Activated B cell treated with CpG ODN at 0.5 μM for 24 hours (primary cell): ENCODE measurements at regions of chr9 and their contacts with region 1.

Region 1: DNA sequence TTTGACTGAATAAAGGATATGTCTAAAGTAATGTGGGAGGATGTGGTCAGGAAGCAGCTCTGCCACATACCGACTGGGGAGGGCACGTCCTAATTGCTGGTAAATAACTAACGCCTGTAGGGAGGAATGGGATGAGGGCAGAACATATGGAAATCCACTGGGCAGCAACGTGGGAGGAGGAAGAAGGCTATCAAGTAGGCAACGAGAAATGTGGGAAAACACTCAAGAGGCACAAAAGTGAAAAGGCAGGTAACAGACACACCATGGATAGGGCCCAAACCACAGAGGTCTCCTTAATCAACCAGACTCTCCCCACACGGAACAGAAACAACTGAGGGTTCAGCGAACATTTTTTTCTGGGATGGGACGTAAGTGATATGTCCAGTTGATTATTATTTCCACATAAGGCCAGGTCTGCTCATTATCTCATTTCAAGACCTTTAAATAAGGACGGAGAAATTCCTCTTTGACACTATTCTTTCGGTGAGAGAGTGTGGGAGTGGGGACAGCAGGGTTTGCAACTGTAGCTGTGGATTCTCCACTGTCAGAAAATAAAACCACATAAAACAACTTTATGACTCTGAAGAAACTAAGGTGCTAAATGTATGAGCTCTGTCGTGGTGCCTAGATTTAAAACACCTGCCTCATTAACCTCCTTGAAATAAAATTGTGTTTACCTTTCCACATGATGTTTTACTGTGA is 17.0 kb downstream of the IARS1 start:
- DNase-seq: no peak
- ATAC-seq: no peak
- H3K4me3 Mint-ChIP-seq: no peak overlapping the region
- H3K27ac Mint-ChIP-seq: no peak overlapping the region
- H3K4me1 Mint-ChIP-seq: no peaks in the 10 kb centered on the region
- H3K27me3 Mint-ChIP-seq: no peaks in the 10 kb centered on the region
- CTCF ChIP-seq: no peak

Region 2: DNA sequence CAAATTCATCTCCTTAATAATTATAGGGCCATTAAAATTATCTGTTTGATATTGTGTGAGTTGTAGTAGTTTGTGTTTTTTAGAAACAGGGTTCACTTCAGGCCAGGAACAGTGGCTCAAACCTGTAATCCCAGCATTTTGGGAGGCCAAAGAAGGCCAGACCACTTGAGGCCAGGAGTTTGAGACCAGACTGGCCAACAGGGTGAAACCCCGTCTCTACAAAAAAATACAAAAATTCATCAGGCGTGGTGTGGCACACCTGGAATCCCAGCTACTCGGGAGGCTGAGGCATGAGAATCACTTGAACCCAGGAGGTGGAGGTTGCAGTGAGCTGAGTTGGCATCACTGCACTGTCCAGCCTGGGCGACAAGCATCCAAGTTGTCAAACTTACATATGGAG is 40.0 kb before region 1 on chr9:
- CTCF ChIA-PET with region 1: no interaction called
- POLR2A ChIA-PET with region 1: no interaction called
- intact Hi-C with region 1: loop called (anchors 5 kb)
- DNase-seq: no peak
- ATAC-seq: no peak
- H3K4me3 Mint-ChIP-seq: no peak overlapping the region
- H3K27ac Mint-ChIP-seq: no peak overlapping the region
- H3K4me1 Mint-ChIP-seq: no peaks in the 10 kb centered on the region
- H3K27me3 Mint-ChIP-seq: no peaks in the 10 kb centered on the region
- CTCF ChIP-seq: no peak

Region 3: DNA sequence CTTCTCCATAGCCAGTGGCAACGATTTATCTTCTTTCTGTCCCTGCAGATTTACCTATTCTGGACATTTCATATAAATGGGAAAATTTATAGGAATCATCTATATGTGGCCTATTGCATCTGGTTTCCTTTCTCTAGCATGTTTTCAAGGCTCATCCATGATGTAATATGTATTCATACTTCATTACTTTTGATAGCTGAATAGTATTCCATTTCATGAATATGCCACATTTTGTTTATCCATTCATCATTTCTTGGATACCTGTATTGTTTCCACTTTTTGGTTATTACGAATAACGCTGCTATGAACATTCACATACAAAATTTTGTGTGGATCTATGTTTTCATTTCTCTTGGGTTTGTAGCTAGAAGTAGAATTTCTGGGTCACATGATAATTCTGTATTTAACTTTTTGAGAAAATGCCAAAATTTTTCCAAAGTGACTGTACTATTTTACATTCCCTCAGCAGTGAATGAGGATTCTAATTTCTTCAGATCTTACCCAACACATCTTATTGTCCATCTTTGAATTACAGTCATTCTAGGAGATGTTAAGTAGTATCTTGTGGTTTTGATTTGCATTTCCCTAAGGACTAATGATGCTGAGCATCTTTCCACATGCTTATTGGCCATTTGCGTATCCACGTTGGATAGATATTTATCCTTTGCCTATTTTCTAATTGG is 13.4 kb after region 1 on chr9:
- CTCF ChIA-PET with region 1: no interaction called
- POLR2A ChIA-PET with region 1: no interaction called
- intact Hi-C with region 1: no loop called
- DNase-seq: no peak
- ATAC-seq: no peak
- H3K4me3 Mint-ChIP-seq: no peak overlapping the region
- H3K27ac Mint-ChIP-seq: no peak overlapping the region
- H3K4me1 Mint-ChIP-seq: peaks cover 53% of the 10 kb centered on the region
- H3K27me3 Mint-ChIP-seq: no peaks in the 10 kb centered on the region
- CTCF ChIP-seq: no peak